ENCODE measurements at regions of chr4 and their contacts with region 1.

Region 1: DNA sequence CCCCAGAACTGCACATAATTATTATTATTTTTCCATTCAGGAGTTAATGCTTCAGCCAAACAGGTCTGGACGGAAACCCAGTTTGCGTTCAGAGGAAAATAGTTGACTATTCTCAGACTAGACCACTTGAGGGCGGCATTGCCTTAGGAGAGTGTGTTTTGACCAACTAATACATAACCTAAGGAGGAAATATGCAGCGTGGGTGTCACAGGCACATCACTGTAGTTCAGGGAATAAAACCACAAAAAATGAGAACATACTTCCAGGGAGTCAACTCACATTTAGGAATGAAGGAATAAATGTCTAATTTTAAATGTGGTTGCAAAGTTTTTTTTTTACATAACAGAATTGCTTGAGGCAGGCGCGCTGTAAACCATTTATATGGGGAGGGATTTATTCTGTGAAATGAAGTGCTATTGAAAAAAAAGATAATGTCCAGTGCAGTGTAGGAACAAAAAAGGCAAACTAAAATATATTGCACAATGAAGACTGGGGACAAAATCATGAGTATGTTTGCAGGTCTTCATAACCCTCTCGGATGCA is 93.3 kb downstream of the SYNPO2 start:
- DNase-seq: peak; percentile 55
- ATAC-seq: peak; percentile 95
- H3K4me3 ChIP-seq: no peak overlapping the region
- H3K27ac ChIP-seq: no peak overlapping the region
- H3K4me1 ChIP-seq: peaks cover 0 to 7% of the 10 kb centered on the region in 2 experiments; a peak in 1 of 4 replicates
- H3K27me3 ChIP-seq: no peaks in the 10 kb centered on the region
- CTCF ChIP-seq: peak; percentile 57 to 85 (median 82); a peak in 5 of 6 replicates
- POLR2A ChIP-seq: no peak
- RAD21 ChIP-seq: peak; percentile 97

Region 2: DNA sequence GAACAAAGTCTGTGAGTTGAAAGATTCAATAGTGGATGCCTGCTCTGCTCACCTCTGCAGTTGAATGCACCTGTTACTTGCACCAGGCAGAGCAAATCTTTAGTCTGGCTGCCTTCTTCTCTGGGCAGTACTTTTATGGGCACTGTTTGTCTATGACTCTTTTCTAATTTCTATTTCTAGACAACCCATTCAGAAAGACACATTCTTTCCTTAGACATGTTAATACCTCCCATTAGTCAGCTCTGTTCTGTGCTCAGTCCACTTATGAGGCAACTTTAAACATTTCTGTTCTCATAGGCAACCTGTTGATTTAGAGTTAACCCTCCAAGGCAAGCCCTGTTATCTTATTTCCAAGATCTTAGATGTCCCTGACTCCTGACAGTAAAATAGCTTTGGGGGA is 15.7 kb after region 1 on chr4:
- CTCF ChIA-PET with region 1: no interaction called
- POLR2A ChIA-PET with region 1: no interaction called
- RAD21 ChIA-PET with region 1: no interaction called
- intact Hi-C with region 1: no loop called
- DNase-seq: no peak
- ATAC-seq: no peak
- H3K4me3 ChIP-seq: no peak overlapping the region
- H3K27ac ChIP-seq: no peak overlapping the region
- H3K4me1 ChIP-seq: no peaks in the 10 kb centered on the region
- H3K27me3 ChIP-seq: no peaks in the 10 kb centered on the region
- CTCF ChIP-seq: no peak
- POLR2A ChIP-seq: no peak
- RAD21 ChIP-seq: no peak

Region 3: GRCh38 chr4:119041951-119042560 is 60.1 kb after region 1 on chr4:
- CTCF ChIA-PET with region 1: interaction called, 3 read pairs
- POLR2A ChIA-PET with region 1: no interaction called
- RAD21 ChIA-PET with region 1: no interaction called
- intact Hi-C with region 1: loop called (anchors 5 kb)
- DNase-seq: peak; percentile 67
- ATAC-seq: peak; percentile 95
- H3K4me3 ChIP-seq: no peak overlapping the region
- H3K27ac ChIP-seq: no peak overlapping the region
- H3K4me1 ChIP-seq: no peaks in the 10 kb centered on the region
- H3K27me3 ChIP-seq: no peaks in the 10 kb centered on the region
- CTCF ChIP-seq: peak; percentile 61 to 80 (median 72)
- POLR2A ChIP-seq: no peak
- RAD21 ChIP-seq: peak; percentile 88

Region 4: GRCh38 chr4:119286377-119287002 is 304.6 kb after region 1 on chr4:
- CTCF ChIA-PET with region 1: no interaction called
- POLR2A ChIA-PET with region 1: no interaction called
- RAD21 ChIA-PET with region 1: no interaction called
- intact Hi-C with region 1: loop called (anchors 2 kb)
- DNase-seq: peak; percentile 47
- ATAC-seq: no peak
- H3K4me3 ChIP-seq: no peak overlapping the region
- H3K27ac ChIP-seq: no peak overlapping the region
- H3K4me1 ChIP-seq: no peaks in the 10 kb centered on the region
- H3K27me3 ChIP-seq: no peaks in the 10 kb centered on the region
- CTCF ChIP-seq: peak; percentile 42 to 70 (median 59)
- POLR2A ChIP-seq: no peak
- RAD21 ChIP-seq: peak; percentile 82

Region 5: GRCh38 chr4:119785963-119786362 is 804.1 kb after region 1 on chr4:
- CTCF ChIA-PET with region 1: no interaction called
- POLR2A ChIA-PET with region 1: no interaction called
- RAD21 ChIA-PET with region 1: no interaction called
- intact Hi-C with region 1: loop called (anchors 5 kb)
- DNase-seq: peak; percentile 13
- ATAC-seq: no peak
- H3K4me3 ChIP-seq: no peak overlapping the region
- H3K27ac ChIP-seq: no peak overlapping the region
- H3K4me1 ChIP-seq: no peaks in the 10 kb centered on the region
- H3K27me3 ChIP-seq: no peaks in the 10 kb centered on the region
- CTCF ChIP-seq: peak; percentile 38 to 55 (median 55); a peak in 5 of 6 replicates
- POLR2A ChIP-seq: no peak
- RAD21 ChIP-seq: peak; percentile 72

Region 6: DNA sequence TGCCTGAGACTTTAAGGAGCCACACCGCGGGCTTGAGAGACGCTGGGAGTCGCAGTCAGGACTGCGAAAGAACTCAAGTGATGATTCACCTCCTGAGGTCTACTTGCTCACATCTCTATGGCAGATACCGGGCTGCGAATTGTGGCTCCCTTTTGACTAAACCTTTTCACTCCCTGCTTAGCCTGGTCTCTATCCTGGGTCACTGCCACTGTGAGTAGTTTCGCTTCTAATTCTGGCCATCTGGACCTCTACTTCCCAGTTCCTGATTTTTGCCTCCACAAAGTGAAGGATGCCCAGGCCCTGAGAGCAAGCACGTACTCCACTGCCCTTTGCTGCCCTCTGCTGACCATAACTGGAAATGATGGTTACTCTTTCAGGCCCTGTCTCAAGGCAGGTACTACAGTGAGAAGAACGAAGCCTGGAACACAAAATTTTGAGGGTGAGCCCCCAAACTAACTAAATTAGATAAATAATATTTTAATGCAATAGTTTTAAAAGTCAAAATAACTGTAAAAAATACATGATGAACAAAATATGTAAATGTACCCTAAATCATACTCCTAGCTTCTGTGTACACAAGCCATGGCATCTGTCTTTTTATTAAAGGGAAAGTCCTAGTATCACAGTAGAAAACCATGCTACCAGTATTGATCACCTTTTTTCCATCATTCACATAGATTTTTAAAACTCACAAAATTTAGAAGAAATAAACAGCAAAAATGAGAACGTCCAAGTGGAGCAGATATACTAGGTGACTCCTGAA is 1068.0 kb after region 1 on chr4:
- CTCF ChIA-PET with region 1: no interaction called
- POLR2A ChIA-PET with region 1: no interaction called
- RAD21 ChIA-PET with region 1: no interaction called
- intact Hi-C with region 1: loop called (anchors 2 kb)
- DNase-seq: peak; percentile 52
- ATAC-seq: peak; percentile 98
- H3K4me3 ChIP-seq: no peak overlapping the region
- H3K27ac ChIP-seq: no peak overlapping the region
- H3K4me1 ChIP-seq: peaks cover 0 to 4% of the 10 kb centered on the region in 2 experiments; a peak in 2 of 4 replicates
- H3K27me3 ChIP-seq: no peaks in the 10 kb centered on the region
- CTCF ChIP-seq: peak; percentile 65 to 77 (median 76)
- POLR2A ChIP-seq: no peak
- RAD21 ChIP-seq: peak; percentile 91

Measured in HCT116 (cell line).